ENCODE measurements at regions of chr16 and their contacts with region 1.

Region 1: DNA sequence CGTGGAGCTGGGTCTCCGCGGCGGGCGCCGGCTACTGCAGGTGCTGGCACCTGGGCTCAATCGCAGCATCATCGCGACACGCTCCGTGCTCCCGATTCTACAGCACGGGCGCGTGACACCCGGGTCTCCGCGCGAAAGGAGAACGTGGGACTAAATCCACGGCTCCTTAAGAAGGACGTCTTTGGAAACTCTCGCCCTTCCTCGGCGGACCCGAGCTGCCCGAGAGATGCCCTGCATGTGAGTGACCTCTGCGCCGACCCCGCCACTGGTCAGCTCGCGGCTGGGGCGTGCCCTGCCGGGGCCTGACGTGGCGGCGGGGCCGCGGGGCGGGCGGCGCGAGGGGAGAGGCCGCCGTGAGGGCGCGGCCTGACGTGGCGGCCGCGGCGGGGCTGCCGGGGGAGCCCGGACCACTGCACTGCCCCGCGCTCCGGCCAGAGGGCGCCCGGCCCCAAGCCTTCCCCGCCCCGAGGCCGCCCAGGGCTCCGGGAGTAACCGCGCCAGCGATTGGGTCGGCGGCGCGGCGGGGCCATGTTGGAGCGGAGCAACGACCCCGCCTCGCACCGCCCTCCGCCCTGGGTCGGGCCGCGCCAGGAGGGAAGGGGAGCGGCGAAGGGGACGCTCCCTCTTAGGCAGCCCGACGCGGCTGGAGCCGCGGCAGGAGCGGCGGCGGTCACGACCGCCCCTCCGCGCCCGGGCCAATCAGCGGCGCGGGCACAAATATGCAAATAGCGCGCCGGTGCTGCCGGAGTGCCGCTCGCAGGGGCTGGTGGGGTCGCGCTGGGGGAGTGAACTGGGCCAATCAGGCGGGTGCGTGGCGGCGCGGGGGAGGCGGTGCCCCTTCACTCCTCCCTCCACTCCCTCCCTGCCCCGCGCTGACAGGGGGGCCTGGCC is 75.6 kb downstream of the CHD9 start:
- DNase-seq: peak; percentile 99
- H3K4me3 ChIP-seq: peak overlapping the region; percentile 56 to 95 (median 90)
- H3K27ac ChIP-seq: peak overlapping the region; percentile 94 to 98 (median 96)
- H3K4me1 ChIP-seq: peaks cover 0 to 45% (median 36%) of the 10 kb centered on the region in 4 donors
- H3K27me3 ChIP-seq: no peaks in the 10 kb centered on the region
- CTCF ChIP-seq: peak in 2 of 4 experiments; percentile 10 to 53
- EP300 ChIP-seq: no peak
- POLR2A ChIP-seq: peak; percentile 20 to 51

Region 2: GRCh38 chr16:53091466-53092211 is 38.8 kb before region 1 on chr16:
- intact Hi-C with region 1: loop called (anchors 2 kb)
- DNase-seq: peak; percentile 85
- H3K4me3 ChIP-seq: no peak overlapping the region
- H3K27ac ChIP-seq: peak overlapping the region; percentile 86 to 90 (median 88)
- H3K4me1 ChIP-seq: peaks cover 0 to 76% (median 68%) of the 10 kb centered on the region in 4 donors
- H3K27me3 ChIP-seq: no peaks in the 10 kb centered on the region
- CTCF ChIP-seq: no peak
- EP300 ChIP-seq: no peak
- POLR2A ChIP-seq: no peak

Region 3: DNA sequence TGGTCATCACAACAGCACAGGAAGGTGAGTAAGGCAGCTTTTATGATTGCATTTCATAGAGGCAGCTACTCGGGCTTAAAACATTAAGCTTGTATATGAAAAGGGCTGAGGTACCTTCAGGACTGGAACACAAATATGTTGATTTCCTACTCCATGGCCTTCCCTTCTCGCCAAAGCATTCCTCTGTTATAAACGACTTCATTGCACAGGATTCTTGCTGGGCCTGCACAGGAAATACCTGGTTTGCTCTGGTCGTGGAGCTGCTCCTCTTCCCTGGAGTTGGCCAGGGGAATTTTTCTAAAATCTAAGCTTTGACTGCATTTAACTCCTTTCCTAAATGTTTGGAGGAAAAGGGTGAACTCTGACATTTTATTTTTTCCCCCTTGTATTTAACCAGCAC is 26.6 kb before region 1 on chr16:
- intact Hi-C with region 1: no loop called
- DNase-seq: no peak
- H3K4me3 ChIP-seq: no peak overlapping the region
- H3K27ac ChIP-seq: peak overlapping the region in 3 of 4 donors; percentile 17 to 27 (median 19)
- H3K4me1 ChIP-seq: peaks cover 0 to 44% (median 33%) of the 10 kb centered on the region in 4 donors
- H3K27me3 ChIP-seq: no peaks in the 10 kb centered on the region
- CTCF ChIP-seq: no peak
- EP300 ChIP-seq: no peak
- POLR2A ChIP-seq: no peak

Region 4: GRCh38 chr16:53207810-53208752 is 77.7 kb after region 1 on chr16:
- intact Hi-C with region 1: loop called (anchors 1 kb)
- DNase-seq: no peak
- H3K4me3 ChIP-seq: peak overlapping the region; percentile 9 to 43 (median 40)
- H3K27ac ChIP-seq: peak overlapping the region; percentile 79 to 82 (median 81)
- H3K4me1 ChIP-seq: peaks cover 0 to 63% (median 31%) of the 10 kb centered on the region in 4 donors
- H3K27me3 ChIP-seq: no peaks in the 10 kb centered on the region
- CTCF ChIP-seq: peak; percentile 38 to 55 (median 52)
- EP300 ChIP-seq: no peak
- POLR2A ChIP-seq: no peak

Region 5: DNA sequence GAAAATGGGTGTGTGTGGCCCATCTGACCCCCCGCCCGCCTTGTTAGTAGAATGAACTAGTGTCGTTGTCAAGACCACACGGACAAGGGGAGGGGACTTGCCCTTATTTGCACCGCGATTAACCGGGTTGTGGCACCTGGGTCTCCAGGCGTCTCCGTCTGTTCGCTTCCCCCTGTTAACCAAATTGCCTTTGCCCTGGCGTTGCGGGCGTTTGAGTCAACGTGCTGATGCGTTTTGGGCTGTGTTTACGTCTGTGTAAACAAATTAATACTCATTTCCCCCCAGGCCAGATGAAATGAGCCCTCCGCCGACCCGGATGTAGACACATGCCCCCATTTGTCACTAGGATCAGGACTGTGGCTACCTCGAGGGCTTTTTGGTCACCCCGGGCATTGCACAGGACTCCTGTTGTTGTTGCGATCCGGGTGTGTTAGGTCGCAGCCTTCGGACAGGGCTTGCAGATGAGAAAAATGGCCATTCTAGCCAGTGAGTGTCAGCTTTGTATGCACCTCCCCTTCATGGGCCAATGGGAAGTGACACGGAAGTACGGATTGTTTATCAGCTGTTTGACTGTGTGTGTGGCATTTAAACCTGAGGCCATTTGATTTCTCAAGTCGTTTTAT is 304.8 kb after region 1 on chr16:
- intact Hi-C with region 1: loop called (anchors 10 kb)
- DNase-seq: peak; percentile 87
- H3K4me3 ChIP-seq: peak overlapping the region; percentile 82 to 97 (median 93)
- H3K27ac ChIP-seq: peak overlapping the region; percentile 95 to 97 (median 97)
- H3K4me1 ChIP-seq: peaks cover 0 to 28% (median 11%) of the 10 kb centered on the region in 4 donors
- H3K27me3 ChIP-seq: no peaks in the 10 kb centered on the region
- CTCF ChIP-seq: no peak
- EP300 ChIP-seq: no peak
- POLR2A ChIP-seq: peak in 1 of 2 donors; percentile 49